ENCODE measurements at regions of chr15 and their contacts with region 1.

Region 1: DNA sequence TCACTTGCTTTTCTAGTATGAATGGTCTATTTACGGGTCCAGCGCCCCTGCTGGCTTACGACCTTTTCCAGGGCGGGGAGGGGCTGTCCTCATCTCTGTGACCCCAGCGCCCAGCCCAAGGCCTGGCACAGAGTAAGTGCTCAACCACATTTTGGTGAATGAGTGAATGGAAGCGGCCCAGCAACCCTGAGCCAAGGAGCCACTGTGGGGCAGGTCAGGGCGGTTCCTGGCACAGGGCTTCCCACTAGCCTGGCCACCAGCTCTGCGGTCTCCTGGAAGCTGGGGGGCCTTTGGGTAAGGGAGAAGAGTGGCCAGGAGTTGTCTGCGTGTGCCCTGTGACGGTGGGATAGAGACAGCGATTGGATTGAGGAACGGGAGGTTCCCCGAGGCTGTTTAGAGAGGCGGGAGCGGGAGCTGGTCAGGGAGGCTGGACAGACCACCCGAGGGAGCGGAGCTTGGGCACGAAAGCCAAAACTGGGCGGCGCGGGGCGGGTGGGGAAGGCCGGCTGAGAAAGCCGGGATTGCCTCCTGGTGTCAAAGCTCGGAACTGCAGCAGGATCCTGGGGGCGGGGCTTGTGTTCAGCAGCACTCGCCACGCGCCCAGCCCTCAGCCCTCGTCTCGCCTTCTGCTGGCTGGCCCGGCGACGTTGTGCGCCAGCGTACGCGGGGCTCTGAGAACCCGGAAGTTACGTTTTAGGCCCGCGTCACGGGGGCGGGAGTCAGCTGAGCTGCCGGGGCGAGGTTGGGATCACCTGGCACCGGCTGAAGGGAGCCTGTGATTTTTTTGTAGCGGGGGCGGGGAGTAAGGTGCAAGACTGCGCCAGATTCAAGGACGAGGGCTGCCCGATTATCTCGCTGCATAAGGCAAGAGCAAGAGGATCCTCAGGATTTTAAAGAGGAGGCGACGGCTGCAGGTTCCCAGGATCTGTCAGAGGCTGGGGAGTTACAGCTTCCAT is at the start of gene VPS18:
- DNase-seq: peak; percentile 95
- H3K4me3 ChIP-seq: peak within 1 kb of the TSS; percentile 88 to 91
- H3K27ac ChIP-seq: peak within 1 kb of the TSS; percentile 51 to 85
- H3K4me1 ChIP-seq: peaks cover 0 to 14% of the 10 kb centered on the region in 2 experiments; a peak in 1 of 4 replicates
- H3K27me3 ChIP-seq: no peaks in the 10 kb centered on the region
- CTCF ChIP-seq: peak; percentile 73
- EP300 ChIP-seq: 0 out of 4 replicates have a peak, but pooled peaks of 1 of the 2 experiments have one; percentile 11
- RAD21 ChIP-seq: peak; percentile 85
- polyA plus RNA-seq, gene VPS18: 13.5 and 14.1 TPM in 2 replicates

Region 2: DNA sequence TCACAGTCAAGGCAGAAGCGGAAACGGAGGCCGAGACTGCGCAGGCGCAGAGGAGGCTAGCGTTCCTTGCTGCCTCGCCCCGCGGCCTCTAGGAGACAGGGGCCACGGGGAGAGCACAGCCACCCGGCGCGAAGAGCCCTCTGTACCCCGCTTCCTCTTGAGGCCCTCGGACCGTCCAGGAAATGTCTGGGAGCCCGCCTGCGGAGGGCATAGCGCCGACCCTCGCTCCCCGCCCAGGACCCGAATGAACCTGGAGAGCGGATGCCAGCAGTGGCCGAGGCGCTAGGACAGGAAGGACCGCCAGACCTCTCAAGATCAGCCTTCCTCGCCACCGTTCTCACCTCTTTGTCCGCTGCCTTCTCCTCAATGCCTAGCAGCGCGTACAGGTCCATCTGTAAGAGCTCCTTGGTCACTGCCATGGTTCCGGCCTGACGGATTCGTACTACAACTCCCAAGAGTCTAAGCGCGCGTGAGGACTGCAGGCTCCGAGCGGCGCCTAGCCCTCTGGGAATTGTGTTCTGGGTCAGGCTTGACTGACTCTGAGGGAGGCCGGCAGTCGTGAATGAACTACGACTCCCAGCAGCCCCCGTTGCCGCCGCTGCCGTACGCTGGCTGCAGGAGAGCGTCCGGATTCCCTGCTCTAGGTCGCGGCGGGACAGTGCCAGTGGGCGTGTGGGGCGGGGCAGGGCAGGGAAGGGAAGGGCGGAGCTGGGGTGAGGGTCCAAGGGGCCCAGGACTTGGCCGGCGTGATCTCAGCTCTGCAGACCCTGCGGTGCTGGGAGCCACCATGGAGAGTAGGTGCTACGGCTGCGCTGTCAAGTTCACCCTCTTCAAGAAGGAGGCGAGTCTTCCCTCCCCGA is 86.8 kb before region 1 on chr15 and contains the starts of genes DNAJC17 and ZFYVE19:
- CTCF ChIA-PET with region 1: interaction called, 11 read pairs
- POLR2A ChIA-PET with region 1: interaction called, 3 read pairs
- DNase-seq: peak; percentile 92
- H3K4me3 ChIP-seq: peak within 1 kb of the TSS; percentile 94 to 98
- H3K27ac ChIP-seq: peak within 1 kb of the TSS; percentile 75 to 95
- H3K4me1 ChIP-seq: peaks cover 4 to 15% of the 10 kb centered on the region in 2 experiments; a peak in 1 of 4 replicates
- H3K27me3 ChIP-seq: no peaks in the 10 kb centered on the region
- CTCF ChIP-seq: no peak
- EP300 ChIP-seq: no peak
- RAD21 ChIP-seq: no peak
- polyA plus RNA-seq, gene DNAJC17: 53.1 and 61.6 TPM in 2 replicates
- polyA plus RNA-seq, gene ZFYVE19: 35.5 and 37.8 TPM in 2 replicates

Region 3: GRCh38 chr15:40847205-40847961 is 46.6 kb before region 1 on chr15:
- CTCF ChIA-PET with region 1: interaction called, 22 read pairs
- POLR2A ChIA-PET with region 1: no interaction called
- DNase-seq: peak; percentile 51
- H3K4me3 ChIP-seq: no peak overlapping the region
- H3K27ac ChIP-seq: no peak overlapping the region
- H3K4me1 ChIP-seq: peaks cover 0 to 17% of the 10 kb centered on the region in 2 experiments; a peak in 1 of 4 replicates
- H3K27me3 ChIP-seq: peaks cover 9% of the 10 kb centered on the region; the same call in 1 of the 2 replicates
- CTCF ChIP-seq: no peak
- EP300 ChIP-seq: no peak
- RAD21 ChIP-seq: no peak

Region 4: GRCh38 chr15:40873625-40874561 is 20.1 kb before region 1 on chr15 and contains the start of gene RHOV:
- CTCF ChIA-PET with region 1: interaction called, 69 read pairs
- POLR2A ChIA-PET with region 1: interaction called, 8 read pairs
- DNase-seq: peak; percentile 92
- H3K4me3 ChIP-seq: peak within 1 kb of the TSS; percentile 52 to 63
- H3K27ac ChIP-seq: no peak within 1 kb of the TSS
- H3K4me1 ChIP-seq: no peaks in the 10 kb centered on the region; a peak in 1 of 4 replicates
- H3K27me3 ChIP-seq: no peaks in the 10 kb centered on the region
- CTCF ChIP-seq: peak; percentile 47
- EP300 ChIP-seq: no peak
- RAD21 ChIP-seq: 0 out of 2 replicates have a peak, but pooled peaks have one; percentile 16
- polyA plus RNA-seq, gene RHOV: 0.49 and 0.62 TPM in 2 replicates

Measured in SK-N-SH (cell line).